Common myeloid progenitor, CD34-positive (primary cell): ENCODE measurements at regions of chr2 and their contacts with region 1.

Region 1: GRCh38 chr2:68441179-68441993 is 25.7 kb downstream of the FBXO48 start:
- DNase-seq: peak; percentile 95 to 98 (median 98)
- H3K4me3 ChIP-seq: no peak overlapping the region
- H3K27ac ChIP-seq: peak overlapping the region; percentile 0 to 62
- H3K4me1 ChIP-seq: peaks cover 10 to 26% (median 20%) of the 10 kb centered on the region in 4 experiments
- H3K27me3 ChIP-seq: no peaks in the 10 kb centered on the region

Region 2: DNA sequence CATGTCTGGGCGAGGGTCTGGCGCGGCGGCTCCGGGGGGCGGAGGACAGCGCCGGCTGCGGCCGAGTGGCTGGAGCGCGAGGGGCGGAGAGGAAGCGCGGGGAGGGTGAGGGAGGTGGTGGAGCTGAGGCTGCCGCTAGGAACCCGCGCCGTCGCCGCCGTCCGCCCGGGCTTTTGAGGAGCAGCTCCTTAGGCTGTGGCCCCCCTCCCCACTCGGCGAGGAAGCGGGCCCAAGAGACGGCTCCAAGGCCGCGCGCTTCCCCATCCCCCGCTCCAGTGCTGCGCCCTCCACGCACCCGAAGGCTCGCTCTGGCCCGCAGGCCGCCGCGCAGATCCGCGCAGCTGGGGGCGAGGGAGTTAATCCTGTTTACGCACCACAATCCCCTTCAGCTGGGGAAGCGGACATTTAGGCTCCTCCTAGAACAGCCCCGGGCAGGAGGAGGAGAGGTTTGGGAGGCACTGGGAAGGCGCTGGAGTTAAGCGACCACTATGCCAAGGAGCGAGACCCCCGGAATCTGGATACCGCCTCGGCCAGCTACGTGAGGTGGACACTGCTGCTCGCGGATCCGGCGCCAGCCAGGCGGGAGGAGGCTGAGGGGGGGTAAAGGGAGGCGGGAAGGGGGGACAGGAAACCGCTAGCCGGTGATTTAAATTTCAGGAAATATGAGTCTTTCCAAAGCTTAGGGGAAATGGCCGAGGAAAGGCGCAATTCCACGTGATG is 121.8 kb before region 1 on chr2 and contains the start of gene CNRIP1:
- CTCF ChIA-PET with region 1: interaction called, 10 read pairs
- POLR2A ChIA-PET with region 1: no interaction called
- DNase-seq: peak in 2 of 3 donors; percentile 43 to 64
- H3K4me3 ChIP-seq: peak within 1 kb of the TSS; percentile 48 to 82 (median 72)
- H3K27ac ChIP-seq: no peak within 1 kb of the TSS
- H3K4me1 ChIP-seq: peaks cover 5 to 21% (median 17%) of the 10 kb centered on the region in 4 experiments
- H3K27me3 ChIP-seq: peaks cover 0 to 36% (median 3%) of the 10 kb centered on the region in 5 experiments

Region 3: GRCh38 chr2:68362069-68362468 is 79.3 kb before region 1 on chr2:
- CTCF ChIA-PET with region 1: interaction called, 31 read pairs
- POLR2A ChIA-PET with region 1: interaction called, 4 read pairs
- DNase-seq: peak; percentile 86 to 90 (median 88)
- H3K4me3 ChIP-seq: peak overlapping the region in 5 of 7 experiments; percentile 30 to 64 (median 39)
- H3K27ac ChIP-seq: no peak overlapping the region
- H3K4me1 ChIP-seq: peaks cover 20 to 52% (median 31%) of the 10 kb centered on the region in 4 experiments
- H3K27me3 ChIP-seq: no peaks in the 10 kb centered on the region

Region 4: GRCh38 chr2:68418855-68419254 is 22.5 kb before region 1 on chr2:
- CTCF ChIA-PET with region 1: interaction called, 17 read pairs
- POLR2A ChIA-PET with region 1: interaction called, 3 read pairs
- DNase-seq: no peak
- H3K4me3 ChIP-seq: no peak overlapping the region
- H3K27ac ChIP-seq: no peak overlapping the region
- H3K4me1 ChIP-seq: peaks cover 18 to 71% (median 42%) of the 10 kb centered on the region in 4 experiments
- H3K27me3 ChIP-seq: no peaks in the 10 kb centered on the region